ENCODE measurements at regions of chr10 and their contacts with region 1.

Region 1: GRCh38 chr10:26682931-26683330 is 14.6 kb upstream of the PDSS1 start:
- DNase-seq: no peak
- ATAC-seq: no peak
- H3K4me3 Mint-ChIP-seq: no peak overlapping the region
- H3K27ac Mint-ChIP-seq: no peak overlapping the region
- H3K4me1 Mint-ChIP-seq: peaks cover 2% of the 10 kb centered on the region
- H3K27me3 Mint-ChIP-seq: peaks cover 8% of the 10 kb centered on the region
- CTCF ChIP-seq: no peak

Region 2: GRCh38 chr10:26697163-26697921 is 14.4 kb after region 1 on chr10 and contains the start of gene PDSS1:
- CTCF ChIA-PET with region 1: no interaction called
- POLR2A ChIA-PET with region 1: interaction called, 3 read pairs
- intact Hi-C with region 1: loop called (anchors 2 kb)
- DNase-seq: peak; percentile 65
- ATAC-seq: peak; percentile 87
- H3K4me3 Mint-ChIP-seq: peak within 1 kb of the TSS; percentile 93
- H3K27ac Mint-ChIP-seq: peak within 1 kb of the TSS; percentile 84
- H3K4me1 Mint-ChIP-seq: peaks cover 27% of the 10 kb centered on the region
- H3K27me3 Mint-ChIP-seq: no peaks in the 10 kb centered on the region
- CTCF ChIP-seq: no peak
- total RNA-seq, gene PDSS1: 8.7 and 9.0 TPM in 2 replicates

Region 3: DNA sequence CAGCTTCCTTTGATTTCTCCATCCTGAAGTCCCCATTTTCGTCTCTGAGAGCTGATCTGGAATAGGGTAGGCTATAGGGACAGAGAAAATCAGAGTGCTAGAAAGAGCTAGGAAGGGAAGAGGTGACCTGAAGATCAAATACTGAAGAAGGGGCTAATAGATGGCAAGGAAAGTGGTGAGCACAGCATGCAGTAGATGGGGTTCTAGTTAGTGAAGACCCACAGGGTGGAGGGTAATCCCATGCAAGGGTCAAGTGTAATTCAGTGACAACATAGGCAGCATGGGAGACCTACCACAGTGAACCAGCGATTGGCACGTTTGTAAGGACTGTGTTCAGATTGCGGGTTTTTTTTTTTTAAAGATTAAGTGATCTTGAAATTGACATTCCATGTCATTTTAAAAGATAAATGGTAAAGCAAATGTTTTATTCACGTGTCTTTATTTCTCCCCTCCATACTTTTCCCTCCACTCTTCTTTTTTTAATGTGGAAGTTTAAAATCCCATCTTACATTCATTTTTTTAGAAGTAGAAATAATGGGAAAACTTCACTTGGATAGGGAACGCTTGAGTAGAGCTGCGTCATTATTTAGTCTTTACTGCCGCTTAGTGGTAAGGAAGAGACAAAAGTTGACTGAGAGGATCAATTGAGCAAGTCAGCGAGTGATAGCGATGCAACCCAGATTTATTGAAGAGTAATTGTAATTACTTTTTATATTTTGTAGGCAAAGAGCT is 198.8 kb after region 1 on chr10:
- CTCF ChIA-PET with region 1: interaction called, 10 read pairs
- POLR2A ChIA-PET with region 1: no interaction called
- intact Hi-C with region 1: loop called (anchors 1 kb)
- DNase-seq: no peak
- ATAC-seq: peak; percentile 75
- H3K4me3 Mint-ChIP-seq: no peak overlapping the region
- H3K27ac Mint-ChIP-seq: no peak overlapping the region
- H3K4me1 Mint-ChIP-seq: peaks cover 2% of the 10 kb centered on the region
- H3K27me3 Mint-ChIP-seq: peaks cover 11% of the 10 kb centered on the region
- CTCF ChIP-seq: no peak

Measured in activated B cell treated with CpG ODN at 0.5 μM for 24 hours (primary cell).